ENCODE measurements at regions of chr3 and their contacts with region 1.

Region 1: GRCh38 chr3:111967651-111968274 is 11.1 kb upstream of the ABHD10 start:
- DNase-seq: peak; percentile 59
- H3K4me3 ChIP-seq: no peak overlapping the region
- H3K27ac ChIP-seq: no peak overlapping the region
- H3K27me3 ChIP-seq: no peaks in the 10 kb centered on the region
- CTCF ChIP-seq: peak; percentile 92

Region 2: DNA sequence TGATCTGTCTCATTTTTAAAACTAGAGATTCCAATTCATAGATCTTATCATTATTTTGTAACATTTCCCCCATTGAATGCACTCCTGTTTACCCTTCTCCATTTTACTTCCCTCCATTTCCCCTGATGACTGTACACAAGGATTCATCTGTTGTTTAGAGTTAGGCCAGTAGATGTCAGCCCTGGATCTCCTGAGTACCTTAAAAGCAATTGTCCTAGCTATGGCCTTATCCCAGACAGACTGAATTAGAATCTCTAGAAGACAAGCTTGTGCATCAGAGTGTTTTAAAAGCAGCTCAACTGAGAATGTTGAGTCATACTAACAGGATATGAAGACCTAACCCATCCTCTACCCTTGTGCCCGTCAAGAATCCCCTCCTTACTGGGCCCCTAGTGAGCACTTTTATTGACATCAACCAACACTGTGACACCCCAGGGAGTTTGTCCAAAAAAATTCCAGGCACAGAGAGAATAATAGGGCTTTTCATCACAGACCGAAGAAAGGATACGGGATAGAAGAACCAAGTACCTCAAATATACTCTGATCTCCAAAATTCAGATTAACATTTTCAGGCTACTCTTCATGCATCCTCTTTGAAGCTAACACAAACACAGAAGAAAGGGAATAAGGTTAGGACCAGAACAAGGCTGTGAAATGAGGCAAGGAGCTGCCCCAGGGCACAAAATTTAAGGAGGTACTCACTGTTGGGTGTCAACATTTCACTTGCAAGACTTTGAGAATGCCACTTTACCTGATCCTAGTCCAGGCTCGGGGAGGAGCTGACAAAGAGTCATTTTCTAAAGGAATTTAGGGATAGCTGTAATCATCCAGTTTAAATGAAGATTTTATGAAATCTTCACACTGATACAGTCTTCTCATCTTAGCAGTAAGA is 389.7 kb before region 1 on chr3:
- CTCF ChIA-PET with region 1: interaction called, 13 read pairs
- POLR2A ChIA-PET with region 1: no interaction called
- DNase-seq: peak; percentile 70
- H3K4me3 ChIP-seq: no peak overlapping the region
- H3K27ac ChIP-seq: no peak overlapping the region
- H3K27me3 ChIP-seq: no peaks in the 10 kb centered on the region
- CTCF ChIP-seq: peak; percentile 80

Region 3: DNA sequence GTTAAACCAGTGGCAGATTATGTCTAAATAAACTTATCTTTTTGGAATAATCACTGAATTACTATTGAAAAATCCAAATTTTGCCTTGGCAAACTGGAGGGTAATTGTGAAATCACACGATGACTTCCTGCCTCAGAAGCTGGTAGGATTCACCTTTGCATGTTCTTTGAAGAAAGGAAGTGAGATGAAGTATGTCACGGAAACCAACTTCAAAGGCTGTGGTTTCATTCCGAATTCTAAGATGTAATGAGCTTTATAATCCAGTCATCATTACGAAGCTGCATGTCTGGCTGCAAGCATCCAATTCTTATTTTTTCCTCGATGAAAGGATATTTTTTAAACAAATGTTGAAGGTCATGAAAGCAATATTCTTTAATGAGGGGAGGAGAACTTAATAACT is 357.6 kb before region 1 on chr3:
- CTCF ChIA-PET with region 1: no interaction called
- POLR2A ChIA-PET with region 1: no interaction called
- DNase-seq: no peak
- H3K4me3 ChIP-seq: no peak overlapping the region
- H3K27ac ChIP-seq: no peak overlapping the region
- H3K27me3 ChIP-seq: no peaks in the 10 kb centered on the region
- CTCF ChIP-seq: no peak

Region 4: GRCh38 chr3:111708157-111708771 is 259.5 kb before region 1 on chr3:
- CTCF ChIA-PET with region 1: interaction called, 276 read pairs
- POLR2A ChIA-PET with region 1: no interaction called
- DNase-seq: no peak
- H3K4me3 ChIP-seq: no peak overlapping the region
- H3K27ac ChIP-seq: no peak overlapping the region
- H3K27me3 ChIP-seq: no peaks in the 10 kb centered on the region
- CTCF ChIP-seq: no peak

Region 5: DNA sequence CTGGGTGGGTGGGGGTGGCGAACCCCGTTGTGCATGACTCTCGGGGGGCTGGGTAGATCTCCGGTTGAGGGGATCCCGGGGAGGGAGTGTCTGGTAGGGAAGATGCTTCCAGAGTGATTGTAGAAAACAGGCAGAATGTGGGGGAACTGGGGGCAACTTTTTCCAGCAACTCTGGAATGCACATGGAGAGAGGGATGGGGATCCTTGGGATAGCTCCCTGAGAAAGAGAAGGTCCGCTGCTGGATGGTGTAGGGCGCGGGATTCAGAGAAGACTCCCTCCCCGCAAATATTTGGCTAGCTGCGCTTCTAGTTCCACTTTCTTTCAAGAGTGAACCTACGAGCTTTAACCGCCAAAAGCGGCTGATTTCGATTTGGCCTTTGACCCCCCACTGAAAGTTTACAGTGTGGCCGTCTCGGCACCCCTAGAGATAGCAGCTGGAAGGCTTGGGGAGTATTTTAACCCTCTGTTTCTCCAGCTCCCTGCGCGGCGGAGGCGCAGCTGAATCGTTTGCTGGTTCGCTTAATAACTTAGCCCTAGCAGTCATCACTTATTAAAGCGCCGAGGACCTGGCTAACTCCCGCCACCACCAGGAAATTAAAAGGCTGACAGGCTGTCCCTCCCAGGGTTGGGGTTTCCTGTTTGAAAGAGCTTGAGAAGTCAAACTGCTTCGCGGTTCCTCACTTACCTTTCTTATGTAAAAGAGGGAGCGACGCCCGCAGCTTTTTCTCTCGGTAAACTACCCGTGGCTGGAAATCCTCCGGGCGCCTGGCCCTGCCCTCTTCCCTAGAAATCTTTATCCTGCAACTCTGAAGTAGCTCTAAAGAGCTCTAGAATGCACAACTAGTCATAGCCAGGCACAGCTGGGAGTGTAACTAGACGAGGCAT is 107.5 kb before region 1 on chr3:
- CTCF ChIA-PET with region 1: interaction called, 27 read pairs
- POLR2A ChIA-PET with region 1: no interaction called
- DNase-seq: no peak
- H3K4me3 ChIP-seq: peak overlapping the region; percentile 78
- H3K27ac ChIP-seq: peak overlapping the region; percentile 95
- H3K27me3 ChIP-seq: no peaks in the 10 kb centered on the region
- CTCF ChIP-seq: peak; percentile 61

Region 6: GRCh38 chr3:111936191-111936841 is 31.4 kb before region 1 on chr3:
- CTCF ChIA-PET with region 1: interaction called, 21 read pairs
- POLR2A ChIA-PET with region 1: no interaction called
- DNase-seq: peak; percentile 53
- H3K4me3 ChIP-seq: no peak overlapping the region
- H3K27ac ChIP-seq: no peak overlapping the region
- H3K27me3 ChIP-seq: no peaks in the 10 kb centered on the region
- CTCF ChIP-seq: no peak

Region 7: DNA sequence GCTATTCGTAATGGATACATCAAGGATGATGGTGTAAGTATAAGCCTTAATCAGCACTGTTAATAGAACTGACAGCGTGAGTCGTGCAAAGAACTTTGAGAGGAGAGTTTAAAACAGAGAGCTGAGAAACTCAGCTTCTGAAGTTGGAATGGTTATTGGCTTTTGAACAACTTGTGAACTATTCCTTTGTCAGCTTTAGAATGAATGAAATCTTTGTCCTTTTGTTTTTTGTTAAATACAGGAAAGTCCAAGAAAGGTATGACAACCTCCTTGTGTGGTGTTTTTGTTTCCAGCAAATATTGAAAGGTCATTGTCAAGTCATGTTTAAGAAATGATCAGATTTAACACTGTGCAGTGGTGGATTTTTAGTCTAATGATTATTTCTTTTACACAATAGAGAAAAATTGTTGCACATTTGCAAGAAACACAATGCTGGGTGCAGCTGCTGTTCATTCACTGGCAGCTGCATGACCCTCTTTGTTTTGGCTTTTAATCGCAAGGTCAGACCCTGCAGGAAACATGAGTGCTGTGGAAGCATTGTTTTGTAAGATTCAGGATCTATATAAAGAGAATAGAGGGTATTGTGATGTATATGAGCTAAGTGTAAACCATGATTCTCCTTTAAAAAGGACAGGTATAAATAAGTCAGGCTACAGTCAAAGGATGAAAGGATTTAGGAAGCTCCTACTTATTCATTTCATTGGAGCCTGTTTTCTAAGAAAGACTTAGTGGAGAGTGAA is 10.6 kb before region 1 on chr3:
- CTCF ChIA-PET with region 1: interaction called, 25 read pairs
- POLR2A ChIA-PET with region 1: no interaction called
- DNase-seq: no peak
- H3K4me3 ChIP-seq: no peak overlapping the region
- H3K27ac ChIP-seq: no peak overlapping the region
- H3K27me3 ChIP-seq: no peaks in the 10 kb centered on the region
- CTCF ChIP-seq: no peak

Region 8: DNA sequence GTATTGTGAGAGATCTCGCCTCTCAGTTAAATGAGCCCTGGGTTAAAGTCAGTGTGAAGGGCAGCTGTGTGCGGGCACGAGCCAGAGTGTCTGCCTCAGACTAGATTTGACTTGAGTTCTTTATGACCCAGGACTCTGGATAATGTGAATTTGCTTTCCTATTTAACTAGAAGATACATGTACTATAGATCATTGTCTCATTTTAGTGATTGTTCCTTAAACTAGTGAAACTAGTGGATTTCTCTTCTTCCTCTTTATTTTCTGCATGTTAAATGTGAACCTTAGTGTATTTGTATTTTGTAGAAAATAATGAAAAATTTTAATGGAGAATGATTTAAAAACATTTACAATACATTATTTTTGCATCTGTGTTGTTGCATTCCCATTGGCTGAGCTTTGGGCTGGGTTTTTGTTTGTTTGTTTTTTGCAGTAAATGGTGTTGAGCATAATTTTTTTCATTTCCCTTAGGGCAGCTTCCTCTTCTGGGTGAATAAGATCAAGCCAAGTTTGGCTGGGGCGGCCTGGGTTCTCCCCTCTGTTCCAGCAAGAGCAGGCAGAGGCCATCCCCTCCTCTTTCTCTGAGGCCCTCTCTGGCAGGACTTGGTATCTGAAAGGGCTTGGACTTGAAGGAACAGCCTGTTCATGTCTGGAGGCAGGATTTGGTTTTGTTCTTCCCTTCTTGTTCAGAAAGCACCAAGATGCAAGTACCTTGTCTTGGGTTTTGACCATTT is 150.2 kb after region 1 on chr3:
- CTCF ChIA-PET with region 1: no interaction called
- POLR2A ChIA-PET with region 1: no interaction called
- DNase-seq: no peak
- H3K4me3 ChIP-seq: no peak overlapping the region
- H3K27ac ChIP-seq: no peak overlapping the region
- H3K27me3 ChIP-seq: no peaks in the 10 kb centered on the region
- CTCF ChIP-seq: no peak

Region 9: DNA sequence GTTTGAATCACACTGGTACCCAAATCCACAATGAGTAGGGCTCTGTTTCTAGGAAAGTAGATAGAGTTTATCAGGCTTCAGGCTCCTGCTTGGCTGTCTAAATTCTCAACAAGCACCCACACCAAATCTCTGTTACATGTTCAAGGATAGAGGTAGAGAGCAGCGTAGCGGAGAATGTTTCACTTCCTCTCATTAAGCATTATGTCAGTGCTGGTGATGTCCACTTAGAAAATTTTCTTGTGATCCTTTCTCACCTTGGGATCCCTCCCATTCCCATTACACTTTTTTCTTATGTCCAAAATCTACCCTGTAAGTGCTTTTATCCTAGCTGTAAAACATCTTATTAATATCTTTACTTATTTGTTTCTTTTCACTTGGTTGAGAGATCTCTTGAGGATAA is 200.0 kb after region 1 on chr3:
- CTCF ChIA-PET with region 1: no interaction called
- POLR2A ChIA-PET with region 1: no interaction called
- DNase-seq: no peak
- H3K4me3 ChIP-seq: no peak overlapping the region
- H3K27ac ChIP-seq: no peak overlapping the region
- H3K27me3 ChIP-seq: no peaks in the 10 kb centered on the region
- CTCF ChIP-seq: no peak